PC-3 (cell line): ENCODE measurements at regions of chr12 and their contacts with region 1.

Region 1: DNA sequence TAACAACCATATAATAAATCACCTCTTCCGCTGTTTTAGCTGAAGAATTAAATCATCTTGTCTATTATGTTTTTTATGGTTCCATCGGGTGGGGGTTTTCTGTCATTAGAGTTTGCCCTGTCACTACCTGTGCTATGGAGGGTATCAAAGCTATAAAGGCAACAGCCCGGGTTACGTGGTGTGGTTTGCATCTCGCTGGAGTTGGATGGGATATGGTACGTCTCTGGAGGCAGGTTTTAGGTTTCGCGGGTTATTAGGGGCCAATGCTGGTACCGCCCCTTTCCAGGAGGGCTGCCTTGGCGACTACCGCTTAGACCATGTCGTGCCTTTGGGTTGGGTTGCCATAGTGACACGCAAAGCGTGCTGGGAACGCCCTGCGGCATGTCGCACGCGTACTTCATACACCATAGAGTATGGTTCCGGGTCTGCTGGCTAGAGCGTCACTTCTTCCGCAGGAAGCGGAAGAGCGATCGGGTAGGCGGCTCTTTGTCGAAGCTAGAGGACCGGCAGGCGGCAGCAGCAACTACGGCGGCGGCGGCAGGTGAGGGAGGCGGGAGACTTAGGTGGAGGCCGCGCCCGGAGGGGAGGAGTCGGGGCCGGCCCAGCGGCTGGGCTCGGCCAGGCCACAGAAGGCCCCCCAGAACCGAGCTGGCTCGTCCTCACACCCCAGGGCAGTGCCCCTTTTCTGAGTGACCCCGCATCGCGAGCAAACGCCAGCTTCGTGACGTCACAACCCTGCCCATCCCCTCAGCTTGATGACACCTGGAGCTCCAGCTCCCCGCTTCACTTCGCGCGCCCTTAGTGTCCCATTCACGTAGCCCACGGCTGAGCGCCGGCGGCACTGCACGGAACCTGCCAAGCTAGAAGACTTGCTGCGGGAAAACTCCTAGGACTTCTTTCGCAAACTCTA is at the start of gene ZC3H10:
- DNase-seq: peak; percentile 100
- ATAC-seq: peak; percentile 77
- H3K4me3 ChIP-seq: peak within 1 kb of the TSS; percentile 96
- H3K27ac ChIP-seq: peak within 1 kb of the TSS; percentile 90
- H3K4me1 ChIP-seq: peaks cover 27% of the 10 kb centered on the region
- H3K27me3 ChIP-seq: no peaks in the 10 kb centered on the region
- CTCF ChIP-seq: peak; percentile 51
- total RNA-seq, gene ZC3H10: 4.8 and 5.6 TPM in 2 replicates

Region 2: GRCh38 chr12:56078990-56079664 is 38.9 kb before region 1 on chr12:
- CTCF ChIA-PET with region 1: no interaction called
- POLR2A ChIA-PET with region 1: interaction called, 4 read pairs
- intact Hi-C with region 1: loop called (anchors 5 kb)
- DNase-seq: peak; percentile 89
- ATAC-seq: peak; percentile 81
- H3K4me3 ChIP-seq: peak overlapping the region; percentile 86
- H3K27ac ChIP-seq: peak overlapping the region; percentile 82
- H3K4me1 ChIP-seq: peaks cover 19% of the 10 kb centered on the region
- H3K27me3 ChIP-seq: no peaks in the 10 kb centered on the region
- CTCF ChIP-seq: peak; percentile 83

Region 3: GRCh38 chr12:56158029-56158925 is 40.2 kb after region 1 on chr12 and contains the start of gene MYL6:
- CTCF ChIA-PET with region 1: interaction called, 3 read pairs
- POLR2A ChIA-PET with region 1: interaction called, 6 read pairs
- intact Hi-C with region 1: loop called (anchors 5 kb)
- DNase-seq: peak; percentile 99
- ATAC-seq: peak; percentile 76
- H3K4me3 ChIP-seq: peak within 1 kb of the TSS; percentile 76
- H3K27ac ChIP-seq: peak within 1 kb of the TSS; percentile 73
- H3K4me1 ChIP-seq: peaks cover 28% of the 10 kb centered on the region
- H3K27me3 ChIP-seq: no peaks in the 10 kb centered on the region
- CTCF ChIP-seq: no peak
- total RNA-seq, gene MYL6: 1,385 and 1,597 TPM in 2 replicates

Region 4: GRCh38 chr12:56206457-56207166 is 88.6 kb after region 1 on chr12:
- CTCF ChIA-PET with region 1: no interaction called
- POLR2A ChIA-PET with region 1: no interaction called
- intact Hi-C with region 1: no loop called
- DNase-seq: peak; percentile 64
- ATAC-seq: peak; percentile 75
- H3K4me3 ChIP-seq: no peak overlapping the region
- H3K27ac ChIP-seq: no peak overlapping the region
- H3K4me1 ChIP-seq: no peaks in the 10 kb centered on the region
- H3K27me3 ChIP-seq: no peaks in the 10 kb centered on the region
- CTCF ChIP-seq: peak; percentile 76

Region 5: DNA sequence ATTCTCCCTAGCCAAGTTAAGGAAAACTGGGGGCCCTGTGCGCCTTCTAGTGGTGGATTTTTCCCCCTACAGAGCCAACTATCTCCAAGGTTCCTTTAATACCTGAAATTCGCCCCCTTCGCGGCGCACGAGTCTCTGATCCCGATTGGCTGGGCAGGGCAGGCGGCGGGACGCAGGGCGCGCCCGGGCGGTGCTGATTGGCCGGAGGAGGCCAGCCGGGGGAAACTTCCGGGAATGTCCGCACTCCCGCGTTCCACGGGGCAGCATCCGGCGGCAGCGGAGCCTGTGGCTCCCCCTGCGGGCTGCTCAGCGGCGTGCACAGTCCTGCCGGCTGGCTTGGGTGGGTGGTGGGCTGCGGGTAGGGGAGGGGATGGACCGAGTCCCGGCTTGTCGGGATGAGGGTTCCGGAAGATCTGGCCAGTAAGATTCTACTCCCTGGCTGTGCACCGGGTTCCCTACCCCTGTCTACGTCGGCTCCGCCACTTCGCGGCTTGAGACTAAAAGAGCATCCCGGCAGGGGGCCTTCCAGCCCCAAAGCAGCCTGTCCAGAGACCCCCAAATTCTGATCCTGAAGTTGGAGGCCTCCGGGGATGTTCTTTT is 106.2 kb after region 1 on chr12 and contains the start of gene NABP2:
- CTCF ChIA-PET with region 1: no interaction called
- POLR2A ChIA-PET with region 1: no interaction called
- intact Hi-C with region 1: loop called (anchors 1 kb)
- DNase-seq: peak; percentile 99
- ATAC-seq: peak; percentile 81
- H3K4me3 ChIP-seq: peak within 1 kb of the TSS; percentile 88
- H3K27ac ChIP-seq: peak within 1 kb of the TSS; percentile 21; the same call in 1 of the 2 replicates
- H3K4me1 ChIP-seq: peaks cover 22% of the 10 kb centered on the region
- H3K27me3 ChIP-seq: no peaks in the 10 kb centered on the region
- CTCF ChIP-seq: peak; percentile 94
- total RNA-seq, gene NABP2: 91.6 and 98.6 TPM in 2 replicates